ENCODE measurements at regions of chr15 and their contacts with region 1.

Region 1: GRCh38 chr15:93223803-93224202 is 134.8 kb upstream of the RGMA start:
- DNase-seq: no peak
- ATAC-seq: no peak
- H3K4me3 ChIP-seq: no peak overlapping the region
- H3K4me3 Mint-ChIP-seq: no peak overlapping the region
- H3K27ac ChIP-seq: no peak overlapping the region
- H3K27ac Mint-ChIP-seq: no peak overlapping the region
- H3K4me1 ChIP-seq: no peaks in the 10 kb centered on the region
- H3K4me1 Mint-ChIP-seq: peaks cover 0 to 2% (median 0%) of the 10 kb centered on the region in 3 donors
- H3K27me3 ChIP-seq: peaks cover 0 to 7% of the 10 kb centered on the region in 2 experiments
- H3K27me3 Mint-ChIP-seq: peaks cover 10 to 22% of the 10 kb centered on the region in 2 donors

Region 2: DNA sequence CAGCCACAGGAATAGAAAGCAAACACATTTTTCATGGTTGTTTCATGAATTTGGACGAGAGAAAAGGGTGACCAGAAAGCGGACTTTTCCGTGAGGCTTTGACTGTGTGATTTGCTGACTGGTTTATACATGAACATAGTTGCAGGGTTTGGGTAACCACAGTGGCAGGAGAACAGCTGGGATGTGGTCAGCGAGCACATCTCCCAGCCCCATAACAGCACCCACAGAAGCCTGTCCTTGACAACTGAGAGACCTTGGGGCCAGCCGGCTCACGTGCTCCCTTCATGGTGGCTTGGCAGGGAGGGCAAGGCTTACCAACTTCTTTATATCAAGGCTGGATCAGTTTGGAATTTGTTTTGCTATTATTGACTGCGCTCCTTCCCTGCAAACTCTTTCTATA is 121.6 kb before region 1 on chr15:
- CTCF ChIA-PET with region 1: no interaction called
- POLR2A ChIA-PET with region 1: no interaction called
- DNase-seq: no peak
- ATAC-seq: no peak
- H3K4me3 ChIP-seq: no peak overlapping the region
- H3K4me3 Mint-ChIP-seq: no peak overlapping the region
- H3K27ac ChIP-seq: no peak overlapping the region
- H3K27ac Mint-ChIP-seq: no peak overlapping the region
- H3K4me1 ChIP-seq: no peaks in the 10 kb centered on the region
- H3K4me1 Mint-ChIP-seq: no peaks in the 10 kb centered on the region
- H3K27me3 ChIP-seq: peaks cover 0 to 13% of the 10 kb centered on the region in 2 experiments
- H3K27me3 Mint-ChIP-seq: peaks cover 24 to 33% of the 10 kb centered on the region in 2 donors

Region 3: GRCh38 chr15:93189561-93189960 is 34.2 kb before region 1 on chr15:
- CTCF ChIA-PET with region 1: no interaction called
- POLR2A ChIA-PET with region 1: no interaction called
- DNase-seq: no peak
- ATAC-seq: no peak
- H3K4me3 ChIP-seq: no peak overlapping the region
- H3K4me3 Mint-ChIP-seq: no peak overlapping the region
- H3K27ac ChIP-seq: no peak overlapping the region
- H3K27ac Mint-ChIP-seq: no peak overlapping the region
- H3K4me1 ChIP-seq: no peaks in the 10 kb centered on the region
- H3K4me1 Mint-ChIP-seq: no peaks in the 10 kb centered on the region
- H3K27me3 ChIP-seq: peaks cover 0 to 4% of the 10 kb centered on the region in 2 experiments
- H3K27me3 Mint-ChIP-seq: peaks cover under 1 to 9% of the 10 kb centered on the region in 2 donors

Region 4: DNA sequence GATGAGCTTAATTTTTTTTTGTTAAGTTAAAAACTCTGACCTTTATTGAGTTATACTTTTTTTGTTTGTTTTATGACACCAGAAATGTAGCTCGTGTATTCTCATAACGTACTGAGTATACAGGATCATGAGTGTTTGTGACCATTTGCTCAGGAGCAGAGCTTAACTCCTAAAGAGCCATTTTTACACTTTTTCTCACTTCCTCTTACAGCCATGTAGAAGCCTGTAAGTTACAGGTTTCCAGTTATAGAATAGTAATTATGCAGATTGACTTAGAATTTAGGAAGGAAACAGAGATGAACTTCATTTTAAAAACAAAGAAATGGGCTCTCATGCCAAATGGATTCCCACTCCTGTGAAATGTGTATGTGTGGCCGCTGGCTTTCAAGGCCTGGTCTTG is 1159.2 kb after region 1 on chr15:
- CTCF ChIA-PET with region 1: no interaction called
- POLR2A ChIA-PET with region 1: interaction called in 1 of 2 experiments, 11 read pairs
- DNase-seq: no peak
- ATAC-seq: no peak
- H3K4me3 ChIP-seq: no peak overlapping the region
- H3K4me3 Mint-ChIP-seq: no peak overlapping the region
- H3K27ac ChIP-seq: no peak overlapping the region
- H3K27ac Mint-ChIP-seq: no peak overlapping the region
- H3K4me1 ChIP-seq: peaks cover 1 to 7% of the 10 kb centered on the region in 2 experiments
- H3K4me1 Mint-ChIP-seq: peaks cover 12 to 22% (median 12%) of the 10 kb centered on the region in 3 donors
- H3K27me3 ChIP-seq: no peaks in the 10 kb centered on the region
- H3K27me3 Mint-ChIP-seq: no peaks in the 10 kb centered on the region